Activated naive CD4-positive, alpha-beta T cell treated with anti-CD3 and anti-CD28 coated beads for 36 hours (primary cell): ENCODE measurements at regions of chr2 and their contacts with region 1.

Region 1: DNA sequence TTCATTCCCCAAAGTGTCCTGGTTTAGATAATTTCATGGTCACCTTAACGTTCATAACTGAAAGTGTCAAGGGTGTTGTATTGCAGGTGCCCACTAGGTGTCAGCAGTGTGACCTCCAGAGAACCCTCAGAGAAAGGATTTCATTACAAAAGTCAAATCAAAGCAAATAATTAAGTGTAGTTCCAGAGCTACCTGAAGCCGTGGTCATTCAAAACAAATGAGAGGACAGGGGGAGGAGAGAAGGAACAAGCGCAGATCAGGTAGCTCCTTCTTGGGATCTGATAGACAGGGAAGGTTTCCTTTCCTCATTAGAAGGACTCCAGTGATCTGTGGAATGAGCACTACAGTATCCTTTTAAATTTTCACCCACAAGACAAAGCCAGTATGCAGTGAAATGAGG is at the start of gene SLC9A4:
- DNase-seq: peak; percentile 79
- H3K4me3 Mint-ChIP-seq: no peak within 1 kb of the TSS
- H3K27ac Mint-ChIP-seq: no peak within 1 kb of the TSS
- H3K4me1 Mint-ChIP-seq: no peaks in the 10 kb centered on the region
- H3K27me3 Mint-ChIP-seq: peaks cover 24% of the 10 kb centered on the region
- total RNA-seq, gene SLC9A4: 0.07 to 0.10 TPM

Region 2: DNA sequence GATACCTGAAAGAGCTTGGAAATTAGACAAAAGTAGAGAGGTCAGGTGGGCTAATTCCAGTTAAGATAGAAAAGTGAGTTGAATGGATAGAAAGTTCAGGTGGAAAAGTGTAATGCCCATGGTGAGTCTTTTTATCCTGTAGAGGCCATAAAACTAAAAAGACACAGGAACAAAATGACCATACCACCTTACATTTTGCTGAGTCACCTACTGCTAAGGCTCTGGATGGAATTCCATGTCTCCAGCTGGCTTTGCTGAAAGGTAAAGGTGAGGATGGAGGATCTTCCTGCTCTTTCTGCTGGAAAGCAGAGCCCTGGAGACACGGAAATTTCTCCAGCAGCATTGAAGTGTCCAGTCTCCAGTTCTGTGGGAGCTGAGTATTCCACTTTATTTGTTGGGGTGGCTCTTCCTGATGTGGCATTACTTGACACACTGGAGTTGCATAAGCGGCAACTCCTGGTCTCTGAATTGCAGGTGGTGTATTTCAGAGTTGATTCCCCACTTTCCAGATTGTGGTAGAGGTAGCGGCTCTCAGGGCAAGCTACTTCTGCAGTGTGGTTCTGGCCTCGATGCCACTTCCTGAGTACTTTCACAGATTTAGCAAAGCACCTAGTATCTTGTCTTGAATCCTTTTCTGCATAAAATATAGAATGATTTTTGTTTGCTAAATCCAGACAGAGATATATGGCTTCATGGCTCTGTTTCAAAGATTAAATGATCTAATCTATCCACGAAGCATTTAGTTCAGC is 275.5 kb before region 1 on chr2:
- CTCF ChIA-PET with region 1: no interaction called
- intact Hi-C with region 1: no loop called
- DNase-seq: no peak
- H3K4me3 Mint-ChIP-seq: no peak overlapping the region
- H3K27ac Mint-ChIP-seq: no peak overlapping the region
- H3K4me1 Mint-ChIP-seq: no peaks in the 10 kb centered on the region
- H3K27me3 Mint-ChIP-seq: peaks cover 20% of the 10 kb centered on the region

Region 3: GRCh38 chr2:102366406-102367112 is 106.5 kb before region 1 on chr2:
- CTCF ChIA-PET with region 1: no interaction called
- intact Hi-C with region 1: no loop called
- DNase-seq: peak; percentile 52
- H3K4me3 Mint-ChIP-seq: peak overlapping the region; percentile 20
- H3K27ac Mint-ChIP-seq: peak overlapping the region; percentile 94
- H3K4me1 Mint-ChIP-seq: peaks cover 80% of the 10 kb centered on the region
- H3K27me3 Mint-ChIP-seq: no peaks in the 10 kb centered on the region

Region 4: DNA sequence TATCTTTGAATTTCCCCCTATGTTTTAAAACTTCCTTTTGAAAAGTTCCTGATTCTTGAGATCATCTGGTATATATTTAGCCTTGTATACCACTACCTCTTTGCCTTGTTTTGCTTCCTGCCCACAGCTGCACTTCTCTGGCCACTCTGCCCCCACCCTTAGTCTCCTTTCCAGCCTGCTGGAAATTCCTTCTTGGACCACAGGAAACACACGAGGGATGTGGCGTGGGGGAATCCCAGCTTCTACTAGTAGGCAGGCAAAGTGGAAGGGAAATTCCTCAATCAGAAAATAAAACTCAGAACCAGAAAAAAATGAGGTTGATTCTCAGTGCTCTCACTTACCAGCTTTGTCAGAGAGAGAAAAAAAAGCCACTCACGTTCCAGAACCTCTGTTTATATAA is 36.7 kb before region 1 on chr2:
- CTCF ChIA-PET with region 1: no interaction called
- intact Hi-C with region 1: no loop called
- DNase-seq: peak; percentile 56
- H3K4me3 Mint-ChIP-seq: no peak overlapping the region
- H3K27ac Mint-ChIP-seq: peak overlapping the region; percentile 68
- H3K4me1 Mint-ChIP-seq: peaks cover 27% of the 10 kb centered on the region
- H3K27me3 Mint-ChIP-seq: no peaks in the 10 kb centered on the region

Region 5: GRCh38 chr2:102460467-102460866 is 12.6 kb before region 1 on chr2:
- CTCF ChIA-PET with region 1: interaction called, 37 read pairs
- intact Hi-C with region 1: no loop called
- DNase-seq: no peak
- H3K4me3 Mint-ChIP-seq: no peak overlapping the region
- H3K27ac Mint-ChIP-seq: no peak overlapping the region
- H3K4me1 Mint-ChIP-seq: no peaks in the 10 kb centered on the region
- H3K27me3 Mint-ChIP-seq: peaks cover 5% of the 10 kb centered on the region

Region 6: DNA sequence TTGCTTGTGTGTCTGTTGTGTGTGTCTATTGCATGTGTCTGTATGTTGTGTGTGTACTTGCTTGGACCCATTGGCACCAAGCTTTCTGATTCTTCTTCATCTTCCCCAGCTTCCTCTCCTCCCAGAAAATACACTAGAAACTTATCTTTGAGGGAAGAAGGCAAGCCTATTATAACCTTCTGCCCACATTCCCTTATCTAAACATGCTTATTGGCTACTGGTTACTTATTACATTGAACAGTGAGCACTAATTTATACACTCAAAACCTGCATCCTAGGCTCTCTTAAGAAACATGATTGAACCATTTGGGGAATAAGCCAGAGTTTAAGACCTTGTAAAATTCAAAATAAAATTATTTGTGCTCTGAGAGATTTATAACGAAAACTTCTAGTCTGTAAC is 26.5 kb after region 1 on chr2:
- CTCF ChIA-PET with region 1: interaction called, 10 read pairs
- intact Hi-C with region 1: no loop called
- DNase-seq: no peak
- H3K4me3 Mint-ChIP-seq: no peak overlapping the region
- H3K27ac Mint-ChIP-seq: no peak overlapping the region
- H3K4me1 Mint-ChIP-seq: peaks cover 5% of the 10 kb centered on the region
- H3K27me3 Mint-ChIP-seq: peaks cover 18% of the 10 kb centered on the region

Region 7: GRCh38 chr2:102520028-102520427 is 47.0 kb after region 1 on chr2:
- CTCF ChIA-PET with region 1: interaction called, 10 read pairs
- intact Hi-C with region 1: no loop called
- DNase-seq: peak; percentile 42
- H3K4me3 Mint-ChIP-seq: no peak overlapping the region
- H3K27ac Mint-ChIP-seq: no peak overlapping the region
- H3K4me1 Mint-ChIP-seq: no peaks in the 10 kb centered on the region
- H3K27me3 Mint-ChIP-seq: peaks cover 2% of the 10 kb centered on the region

Region 8: DNA sequence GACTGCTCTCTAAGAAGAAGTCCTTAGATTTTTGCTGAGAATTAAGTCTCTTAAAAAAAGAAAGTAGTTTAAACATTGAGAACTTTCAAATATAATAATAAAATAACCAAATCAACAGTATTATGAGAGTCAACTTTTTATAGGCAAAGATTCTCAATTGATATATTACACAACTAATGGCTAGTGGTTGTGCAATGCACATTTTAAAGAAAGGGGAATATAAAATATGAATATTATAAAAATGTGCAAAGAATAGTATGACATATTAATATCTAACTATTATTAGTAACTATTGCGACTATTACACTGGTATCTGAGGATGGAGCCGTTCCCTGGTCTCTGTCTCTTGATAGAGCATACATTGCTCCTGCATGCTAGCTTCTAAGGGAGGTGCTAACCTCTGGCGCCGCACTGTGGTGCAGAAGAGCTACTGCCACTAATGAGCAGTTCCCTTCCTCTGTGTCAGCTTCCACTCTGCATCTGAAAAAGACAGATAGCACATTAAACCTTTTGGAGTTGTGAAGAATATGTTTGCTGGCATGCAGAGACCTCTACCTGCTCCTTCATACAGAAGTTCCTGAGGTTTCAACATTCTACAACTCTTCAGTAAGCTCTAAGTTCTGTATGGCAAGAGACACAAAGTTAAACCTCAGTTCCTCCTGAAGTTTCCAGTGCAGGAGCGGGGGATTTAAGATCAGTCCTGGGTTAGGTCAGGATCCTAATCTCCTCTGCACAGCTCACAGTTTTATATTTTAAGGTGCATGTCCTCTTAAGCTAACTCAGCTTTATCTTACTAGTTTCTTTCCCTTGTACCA is 142.8 kb after region 1 on chr2:
- CTCF ChIA-PET with region 1: interaction called, 53 read pairs
- intact Hi-C with region 1: loop called (anchors 1 kb)
- DNase-seq: peak; percentile 72
- H3K4me3 Mint-ChIP-seq: no peak overlapping the region
- H3K27ac Mint-ChIP-seq: no peak overlapping the region
- H3K4me1 Mint-ChIP-seq: peaks cover 12% of the 10 kb centered on the region
- H3K27me3 Mint-ChIP-seq: peaks cover 41% of the 10 kb centered on the region

Region 9: DNA sequence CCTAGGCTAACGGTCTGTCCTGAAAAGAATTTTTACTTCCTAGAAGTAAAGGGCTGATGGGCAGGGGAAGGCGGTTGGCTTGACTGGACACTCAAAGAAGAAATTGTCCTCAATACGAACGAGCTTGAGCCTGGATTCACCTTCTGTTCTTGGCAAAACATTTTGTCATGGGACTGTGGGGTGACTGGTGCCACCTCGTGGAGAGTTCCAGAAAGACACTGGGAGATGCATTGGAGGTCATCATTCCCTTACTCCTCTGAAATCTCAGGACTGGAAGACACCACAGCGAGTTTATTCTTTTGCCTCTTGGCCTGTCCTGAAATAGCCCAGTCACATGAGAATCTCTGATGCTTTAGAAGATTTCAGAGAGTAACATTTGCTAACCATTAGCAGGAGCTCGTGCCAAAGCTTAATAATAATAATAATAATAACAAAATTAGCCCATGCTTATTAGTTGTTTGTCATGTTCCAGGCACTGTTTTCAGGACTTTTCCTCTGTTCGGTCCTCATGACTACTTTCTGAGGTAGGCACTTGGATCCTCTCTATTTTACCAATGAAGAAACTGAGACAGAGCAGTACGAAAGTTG is 333.3 kb after region 1 on chr2:
- CTCF ChIA-PET with region 1: interaction called, 4 read pairs
- intact Hi-C with region 1: loop called (anchors 1 kb)
- DNase-seq: peak; percentile 60
- H3K4me3 Mint-ChIP-seq: no peak overlapping the region
- H3K27ac Mint-ChIP-seq: no peak overlapping the region
- H3K4me1 Mint-ChIP-seq: peaks cover 14% of the 10 kb centered on the region
- H3K27me3 Mint-ChIP-seq: no peaks in the 10 kb centered on the region